ENCODE measurements at regions of chrX and their contacts with region 1.

Region 1: DNA sequence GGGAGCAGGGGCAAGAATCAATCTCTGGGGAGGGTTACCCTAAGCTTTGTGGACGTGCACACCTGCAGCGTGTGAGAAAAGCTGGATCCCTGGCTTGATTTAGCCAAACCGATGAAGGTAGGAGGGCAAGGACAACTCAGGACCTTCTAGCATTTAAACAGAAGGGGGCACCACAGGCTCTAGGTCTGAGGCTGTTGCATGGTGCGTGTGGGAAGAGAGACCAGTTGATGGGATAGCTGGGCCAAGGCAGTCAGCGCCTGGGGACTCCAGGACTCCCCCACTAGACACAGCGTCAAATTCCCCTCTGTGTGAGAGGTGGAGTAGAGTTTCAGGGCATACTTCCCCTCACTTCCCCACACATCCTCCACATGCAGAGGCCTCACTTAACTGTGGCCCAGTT is 4.3 kb downstream of the GABRQ start:
- DNase-seq: peak; percentile 31
- ATAC-seq: peak; percentile 37; the same call in 1 of the 2 replicates
- H3K4me3 ChIP-seq: no peak overlapping the region
- H3K27ac ChIP-seq: no peak overlapping the region
- H3K4me1 ChIP-seq: no peaks in the 10 kb centered on the region
- H3K27me3 ChIP-seq: peaks cover 21% of the 10 kb centered on the region
- CTCF ChIP-seq: peak; percentile 38; the same call in 1 of the 2 replicates

Region 2: GRCh38 chrX:152830312-152831305 is 188.6 kb after region 1 on chrX and contains the starts of genes CETN2 and NSDHL:
- CTCF ChIA-PET with region 1: no interaction called
- POLR2A ChIA-PET with region 1: no interaction called
- intact Hi-C with region 1: no loop called
- DNase-seq: peak; percentile 95
- ATAC-seq: peak; percentile 95
- H3K4me3 ChIP-seq: peak within 1 kb of the TSS; percentile 91
- H3K27ac ChIP-seq: peak within 1 kb of the TSS; percentile 45
- H3K4me1 ChIP-seq: peaks cover 12% of the 10 kb centered on the region
- H3K27me3 ChIP-seq: no peaks in the 10 kb centered on the region
- CTCF ChIP-seq: no peak
- total RNA-seq, gene CETN2: 40.9 and 42.9 TPM in 2 replicates
- total RNA-seq, gene NSDHL: 32.3 and 33.7 TPM in 2 replicates

Region 3: DNA sequence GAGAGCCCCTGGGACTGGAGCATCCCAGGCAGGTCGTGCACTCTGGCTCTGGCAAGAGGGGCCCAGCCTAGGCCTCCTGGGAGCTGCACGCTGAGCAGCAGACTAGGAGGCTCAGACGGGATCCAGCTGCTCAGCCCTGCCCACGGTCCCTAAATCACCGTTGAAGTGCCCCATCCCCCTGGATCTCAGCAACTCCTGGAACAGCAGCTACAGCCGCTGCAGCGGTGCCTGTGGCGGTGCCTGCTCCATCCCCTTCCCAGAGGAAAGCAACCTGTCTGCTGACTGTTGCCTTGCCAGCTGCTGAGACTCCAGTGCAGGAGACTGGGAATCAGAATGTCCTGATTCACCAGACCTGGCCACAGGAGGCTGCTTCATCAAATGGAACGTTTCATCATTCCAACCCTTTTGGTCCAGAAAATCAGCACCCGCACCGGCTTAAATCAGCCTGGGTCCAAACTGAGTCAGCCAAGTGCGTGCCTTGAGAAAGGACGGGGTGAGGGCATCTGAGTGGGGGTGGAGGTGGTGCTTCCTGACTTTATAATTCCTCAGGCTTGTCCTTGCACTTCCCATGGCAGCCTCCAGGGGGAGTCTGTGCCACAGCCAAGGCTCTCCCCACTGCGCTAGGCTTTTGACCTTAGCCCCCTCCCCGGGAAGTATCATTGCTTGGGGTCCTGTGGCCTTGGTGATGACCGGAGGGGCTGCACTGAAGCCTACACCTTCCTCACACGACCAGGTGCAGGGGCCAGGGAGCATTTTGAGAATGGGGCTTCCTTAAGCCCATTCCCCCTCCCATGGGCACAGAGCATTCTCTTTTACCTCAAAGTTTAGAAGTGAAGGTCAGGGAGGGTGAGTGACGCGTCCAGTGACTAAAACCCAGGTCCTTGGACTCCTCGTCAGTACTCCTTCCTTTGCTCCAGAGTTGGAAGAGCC is 262.4 kb after region 1 on chrX:
- CTCF ChIA-PET with region 1: no interaction called
- POLR2A ChIA-PET with region 1: no interaction called
- intact Hi-C with region 1: no loop called
- DNase-seq: peak; percentile 60
- ATAC-seq: peak; percentile 54
- H3K4me3 ChIP-seq: no peak overlapping the region
- H3K27ac ChIP-seq: no peak overlapping the region
- H3K4me1 ChIP-seq: peaks cover 28% of the 10 kb centered on the region
- H3K27me3 ChIP-seq: no peaks in the 10 kb centered on the region
- CTCF ChIP-seq: peak; percentile 78

Region 4: GRCh38 chrX:152926279-152926678 is 284.3 kb after region 1 on chrX:
- CTCF ChIA-PET with region 1: no interaction called
- POLR2A ChIA-PET with region 1: no interaction called
- intact Hi-C with region 1: loop called (anchors 5 kb)
- DNase-seq: peak; percentile 96
- ATAC-seq: peak; percentile 91
- H3K4me3 ChIP-seq: no peak overlapping the region
- H3K27ac ChIP-seq: no peak overlapping the region
- H3K4me1 ChIP-seq: peaks cover 12% of the 10 kb centered on the region
- H3K27me3 ChIP-seq: no peaks in the 10 kb centered on the region
- CTCF ChIP-seq: peak; percentile 74

Measured in PC-3 (cell line).